Common myeloid progenitor, CD34-positive (primary cell): ENCODE measurements at regions of chr9 and their contacts with region 1.

Region 1: GRCh38 chr9:87812375-87813118 is 70.1 kb upstream of the SPATA31E1 start:
- DNase-seq: peak in 1 of 3 donors; percentile 21
- H3K4me3 ChIP-seq: no peak overlapping the region
- H3K27ac ChIP-seq: no peak overlapping the region
- H3K4me1 ChIP-seq: peaks cover 0 to 6% (median 0%) of the 10 kb centered on the region in 4 experiments
- H3K27me3 ChIP-seq: peaks cover 0 to 9% (median 2%) of the 10 kb centered on the region in 5 experiments

Region 2: DNA sequence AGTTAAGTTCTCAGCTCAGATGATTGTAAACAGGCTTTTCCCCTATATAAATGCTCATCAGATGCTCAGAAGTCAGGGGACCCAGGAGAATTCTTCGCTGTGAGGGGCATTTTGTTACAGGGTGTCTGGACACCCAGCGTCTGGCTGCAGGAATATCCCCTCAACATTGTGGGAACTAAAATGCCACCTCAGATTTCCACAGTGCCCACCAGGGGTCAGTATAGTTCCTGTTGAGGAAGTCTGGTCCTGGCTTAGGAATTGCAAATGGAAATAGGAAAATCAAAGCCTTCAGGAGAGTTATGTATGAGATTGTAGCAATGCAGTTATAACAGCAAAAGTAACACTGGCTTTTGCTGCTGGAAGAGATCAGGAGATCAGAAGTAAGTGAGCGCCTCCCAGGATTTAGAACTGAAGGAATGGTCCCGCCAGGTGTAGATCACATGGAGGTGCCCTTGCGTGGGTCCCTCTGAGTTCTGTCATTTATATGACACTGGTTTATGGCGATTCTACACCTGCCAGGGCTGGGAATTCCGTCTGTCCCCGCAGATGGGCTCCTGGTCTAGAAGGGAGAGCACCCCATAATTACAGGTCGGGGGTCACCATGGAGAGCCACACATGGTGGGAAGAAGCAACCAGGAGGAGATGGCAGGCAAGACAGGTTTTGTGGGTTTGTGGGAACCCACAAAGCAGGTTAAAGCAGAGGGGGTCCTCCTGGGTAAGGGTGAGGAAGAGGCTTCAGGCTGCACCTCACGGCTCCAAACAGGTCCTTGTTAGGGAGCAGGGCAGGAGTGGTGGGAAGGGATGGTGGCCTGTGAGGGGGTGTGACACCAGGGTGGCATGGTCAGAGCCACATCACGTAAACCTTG is 133.7 kb before region 1 on chr9:
- CTCF ChIA-PET with region 1: interaction called, 14 read pairs
- POLR2A ChIA-PET with region 1: no interaction called
- DNase-seq: peak; percentile 47 to 53 (median 48)
- H3K4me3 ChIP-seq: no peak overlapping the region
- H3K27ac ChIP-seq: no peak overlapping the region
- H3K4me1 ChIP-seq: peaks cover 0 to 39% (median 23%) of the 10 kb centered on the region in 4 experiments
- H3K27me3 ChIP-seq: no peaks in the 10 kb centered on the region

Region 3: DNA sequence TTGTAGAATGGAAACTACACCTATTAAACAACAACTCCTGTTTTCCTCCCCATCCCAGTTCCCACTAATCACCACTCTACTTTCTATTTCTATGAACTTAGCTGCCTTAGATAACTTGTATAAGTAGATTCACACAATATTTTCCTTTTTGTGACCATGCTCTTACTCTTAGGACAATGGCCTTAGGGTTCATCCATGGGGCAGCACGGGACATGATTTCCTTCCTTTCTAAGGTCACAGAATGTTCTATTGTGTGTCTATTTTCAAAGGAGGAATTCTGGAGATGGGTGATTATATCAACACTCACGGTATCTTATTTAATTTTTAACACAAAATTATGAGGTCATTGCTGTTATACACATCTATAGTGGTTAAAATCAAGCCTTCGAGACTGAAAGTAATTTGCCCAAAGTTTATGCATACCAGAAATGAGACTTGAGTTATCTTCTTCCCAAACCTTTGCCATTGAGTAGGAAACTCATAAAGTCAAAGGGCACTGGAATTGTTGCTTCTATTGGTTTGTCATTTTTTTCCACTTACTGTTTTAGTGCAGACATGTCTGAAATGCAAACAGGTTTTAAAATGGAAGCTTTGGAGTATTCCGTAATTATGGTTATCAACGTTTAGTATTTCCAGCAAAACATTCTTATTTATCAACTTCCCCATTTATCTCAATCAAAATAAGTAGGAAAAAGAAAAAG is 63.1 kb before region 1 on chr9:
- CTCF ChIA-PET with region 1: no interaction called
- POLR2A ChIA-PET with region 1: no interaction called
- DNase-seq: no peak
- H3K4me3 ChIP-seq: no peak overlapping the region
- H3K27ac ChIP-seq: no peak overlapping the region
- H3K4me1 ChIP-seq: no peaks in the 10 kb centered on the region
- H3K27me3 ChIP-seq: peaks cover 0 to 5% (median 2%) of the 10 kb centered on the region in 5 experiments

Region 4: GRCh38 chr9:87824216-87824875 is 11.8 kb after region 1 on chr9:
- CTCF ChIA-PET with region 1: no interaction called
- POLR2A ChIA-PET with region 1: no interaction called
- DNase-seq: no peak
- H3K4me3 ChIP-seq: no peak overlapping the region
- H3K27ac ChIP-seq: no peak overlapping the region
- H3K4me1 ChIP-seq: no peaks in the 10 kb centered on the region
- H3K27me3 ChIP-seq: peaks cover 0 to 7% (median 2%) of the 10 kb centered on the region in 5 experiments

Region 5: DNA sequence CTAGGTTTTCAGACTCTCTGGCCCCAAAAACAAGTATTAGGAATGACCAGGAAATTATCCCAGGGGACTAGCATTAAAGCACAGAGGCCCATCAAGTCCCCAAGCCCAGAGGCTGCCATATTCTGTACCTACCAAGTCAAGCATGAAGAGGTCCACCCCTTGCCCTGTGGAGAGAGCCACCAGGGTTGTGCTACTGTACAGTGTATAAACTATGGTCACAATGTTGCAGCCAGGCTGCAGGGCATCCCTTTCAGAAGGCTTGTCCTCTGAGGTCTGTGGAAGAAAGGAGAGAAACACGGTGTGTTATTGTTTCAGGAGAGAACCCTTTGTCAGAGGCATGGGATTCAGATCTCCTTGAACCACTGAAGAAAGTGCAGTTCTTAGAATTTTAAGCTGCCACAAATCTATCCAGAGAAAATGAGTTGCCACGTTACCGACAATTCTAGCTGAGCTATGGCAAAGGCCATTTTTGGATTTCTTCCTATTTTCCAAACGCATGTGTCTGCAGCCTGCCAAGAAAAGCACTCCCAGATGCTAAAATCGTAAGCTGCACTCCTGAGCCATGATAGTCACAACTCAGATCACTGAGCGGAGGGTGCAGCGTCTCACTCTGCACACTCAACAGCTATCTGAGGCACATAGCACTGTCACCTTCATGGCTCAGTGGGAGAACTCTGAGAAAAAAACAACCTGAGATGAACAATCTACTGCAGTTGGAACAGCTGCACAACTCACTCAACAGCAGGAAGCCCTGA is 24.6 kb after region 1 on chr9:
- CTCF ChIA-PET with region 1: no interaction called
- POLR2A ChIA-PET with region 1: no interaction called
- DNase-seq: no peak
- H3K4me3 ChIP-seq: no peak overlapping the region
- H3K27ac ChIP-seq: no peak overlapping the region
- H3K4me1 ChIP-seq: peaks cover 0 to 2% (median 0%) of the 10 kb centered on the region in 4 experiments
- H3K27me3 ChIP-seq: peaks cover 0 to 3% (median 0%) of the 10 kb centered on the region in 5 experiments